ENCODE measurements at regions of chr19 and their contacts with region 1.

Region 1: GRCh38 chr19:16197622-16198369 is at the start of gene AP1M1:
- DNase-seq: peak; percentile 99
- H3K4me3 ChIP-seq: peak within 1 kb of the TSS; percentile 41 to 94 (median 73)
- H3K27ac ChIP-seq: peak within 1 kb of the TSS; percentile 22 to 77 (median 25)
- H3K4me1 ChIP-seq: peaks cover 12 to 26% of the 10 kb centered on the region in 2 donors
- H3K27me3 ChIP-seq: no peaks in the 10 kb centered on the region
- CTCF ChIP-seq: no peak
- POLR2A ChIP-seq: peak in 1 of 2 donors; percentile 47
- total RNA-seq, gene AP1M1: 52.0 to 83.0 (median 56.3) TPM

Region 2: GRCh38 chr19:16111160-16111908 is 86.5 kb before region 1 on chr19 and contains the start of gene RAB8A:
- intact Hi-C with region 1: loop called (anchors 5 kb)
- DNase-seq: peak; percentile 99
- H3K4me3 ChIP-seq: peak within 1 kb of the TSS; percentile 81 to 97 (median 93)
- H3K27ac ChIP-seq: peak within 1 kb of the TSS; percentile 79 to 86 (median 85)
- H3K4me1 ChIP-seq: peaks cover 10 to 18% of the 10 kb centered on the region in 2 donors
- H3K27me3 ChIP-seq: no peaks in the 10 kb centered on the region
- CTCF ChIP-seq: peak; percentile 65 to 100 (median 98)
- POLR2A ChIP-seq: peak in 1 of 2 donors; percentile 65
- total RNA-seq, gene RAB8A: 40.2 to 65.6 (median 51.5) TPM

Region 3: GRCh38 chr19:16272945-16273344 is 75.1 kb after region 1 on chr19:
- intact Hi-C with region 1: no loop called
- DNase-seq: no peak
- H3K4me3 ChIP-seq: no peak overlapping the region
- H3K27ac ChIP-seq: peak overlapping the region in 1 of 3 donors; percentile 1
- H3K4me1 ChIP-seq: peaks cover 0 to 17% of the 10 kb centered on the region in 2 donors
- H3K27me3 ChIP-seq: no peaks in the 10 kb centered on the region
- CTCF ChIP-seq: no peak
- POLR2A ChIP-seq: no peak

Measured in thyroid gland (tissue), 4 donors.